B cell (primary cell): ENCODE measurements at regions of chr6 and their contacts with region 1.

Region 1: GRCh38 chr6:137102851-137103492 is 58.2 kb upstream of the IL20RA start:
- DNase-seq: peak; percentile 92
- ATAC-seq: peak; percentile 81
- H3K4me3 ChIP-seq: peak overlapping the region in 4 of 5 experiments; percentile 8 to 49 (median 16)
- H3K4me3 Mint-ChIP-seq: peak overlapping the region; percentile 86
- H3K27ac ChIP-seq: peak overlapping the region; percentile 97
- H3K27ac Mint-ChIP-seq: peak overlapping the region; percentile 99
- H3K4me1 ChIP-seq: peaks cover 89 to 91% of the 10 kb centered on the region in 2 donors
- H3K4me1 Mint-ChIP-seq: peaks cover 87% of the 10 kb centered on the region
- H3K27me3 ChIP-seq: no peaks in the 10 kb centered on the region
- H3K27me3 Mint-ChIP-seq: no peaks in the 10 kb centered on the region
- CTCF ChIP-seq: no peak

Region 2: DNA sequence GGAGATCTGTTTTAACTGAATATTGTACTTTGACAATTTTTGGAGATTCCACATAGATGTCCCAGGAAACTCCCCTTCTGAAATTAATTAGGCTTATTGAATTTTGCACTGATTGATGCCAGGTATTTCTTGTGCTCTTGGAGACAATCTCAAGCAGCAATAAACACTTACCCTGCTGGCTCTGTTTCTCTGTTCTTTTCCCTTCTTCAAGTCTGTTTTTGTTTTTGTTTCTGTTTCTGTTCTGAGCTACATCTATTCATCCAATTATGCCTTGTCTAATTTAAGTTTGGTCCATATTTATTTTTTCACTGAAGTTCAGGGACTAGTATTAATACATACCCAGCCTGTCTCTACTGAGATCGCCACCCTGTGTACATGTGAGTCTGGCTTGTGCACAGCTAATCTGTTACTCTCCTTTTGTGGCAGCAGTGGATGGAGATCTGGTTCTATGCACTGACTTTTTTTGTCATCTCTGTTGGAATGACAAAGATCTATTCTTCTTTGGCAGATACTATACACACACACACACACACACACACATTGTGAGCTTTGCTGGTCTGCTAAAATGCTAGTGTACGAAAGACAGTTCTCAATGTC is 18.5 kb after region 1 on chr6:
- CTCF ChIA-PET with region 1: interaction called, 10 read pairs
- POLR2A ChIA-PET with region 1: interaction called, 5 read pairs
- intact Hi-C with region 1: loop called (anchors 2 kb)
- DNase-seq: peak; percentile 39
- ATAC-seq: peak; percentile 28
- H3K4me3 ChIP-seq: peak overlapping the region in 1 of 5 experiments; percentile 25
- H3K4me3 Mint-ChIP-seq: peak overlapping the region; percentile 83
- H3K27ac ChIP-seq: peak overlapping the region; percentile 22 to 74
- H3K27ac Mint-ChIP-seq: peak overlapping the region; percentile 91
- H3K4me1 ChIP-seq: peaks cover 27 to 29% of the 10 kb centered on the region in 2 donors
- H3K4me1 Mint-ChIP-seq: peaks cover 35% of the 10 kb centered on the region
- H3K27me3 ChIP-seq: no peaks in the 10 kb centered on the region
- H3K27me3 Mint-ChIP-seq: no peaks in the 10 kb centered on the region
- CTCF ChIP-seq: no peak

Region 3: GRCh38 chr6:137432054-137432611 is 329.2 kb after region 1 on chr6:
- CTCF ChIA-PET with region 1: no interaction called
- POLR2A ChIA-PET with region 1: no interaction called
- intact Hi-C with region 1: loop called (anchors 2 kb)
- DNase-seq: peak; percentile 64
- ATAC-seq: peak; percentile 67
- H3K4me3 ChIP-seq: peak overlapping the region in 1 of 5 experiments; percentile 42
- H3K4me3 Mint-ChIP-seq: peak overlapping the region; percentile 78
- H3K27ac ChIP-seq: no peak overlapping the region
- H3K27ac Mint-ChIP-seq: peak overlapping the region; percentile 2
- H3K4me1 ChIP-seq: peaks cover 34 to 35% of the 10 kb centered on the region in 2 donors
- H3K4me1 Mint-ChIP-seq: peaks cover 34% of the 10 kb centered on the region
- H3K27me3 ChIP-seq: no peaks in the 10 kb centered on the region
- H3K27me3 Mint-ChIP-seq: no peaks in the 10 kb centered on the region
- CTCF ChIP-seq: no peak